Motor neuron (in vitro differentiated cells): ENCODE measurements at regions of chr7 and their contacts with region 1.

Region 1: GRCh38 chr7:122528879-122529481 is 169.9 kb downstream of the RNF133 start:
- ATAC-seq: no peak
- H3K4me3 ChIP-seq: no peak overlapping the region
- H3K27ac ChIP-seq: no peak overlapping the region
- H3K4me1 ChIP-seq: no peaks in the 10 kb centered on the region

Region 2: GRCh38 chr7:122027058-122027457 is 501.9 kb before region 1 on chr7:
- in situ Hi-C with region 1: loop called in 1 of 9 experiments (anchors 10 kb)
- ATAC-seq: no peak
- H3K4me3 ChIP-seq: no peak overlapping the region
- H3K27ac ChIP-seq: no peak overlapping the region
- H3K4me1 ChIP-seq: no peaks in the 10 kb centered on the region

Region 3: GRCh38 chr7:122092964-122093797 is 435.8 kb before region 1 on chr7:
- in situ Hi-C with region 1: loop called in 1 of 9 experiments (anchors 25 kb)
- ATAC-seq: peak in 4 of 8 experiments; percentile 22 to 71 (median 62)
- H3K4me3 ChIP-seq: no peak overlapping the region
- H3K27ac ChIP-seq: no peak overlapping the region
- H3K4me1 ChIP-seq: no peaks in the 10 kb centered on the region

Region 4: GRCh38 chr7:122219253-122219865 is 309.6 kb before region 1 on chr7:
- in situ Hi-C with region 1: loop called in 7 of 9 experiments (anchors 10 to 25 kb)
- ATAC-seq: no peak
- H3K4me3 ChIP-seq: no peak overlapping the region
- H3K27ac ChIP-seq: no peak overlapping the region
- H3K4me1 ChIP-seq: no peaks in the 10 kb centered on the region

Region 5: GRCh38 chr7:122225874-122226273 is 303.1 kb before region 1 on chr7:
- in situ Hi-C with region 1: loop called in 6 of 9 experiments (anchors 10 to 25 kb)
- ATAC-seq: no peak
- H3K4me3 ChIP-seq: no peak overlapping the region
- H3K27ac ChIP-seq: no peak overlapping the region
- H3K4me1 ChIP-seq: no peaks in the 10 kb centered on the region

Region 6: DNA sequence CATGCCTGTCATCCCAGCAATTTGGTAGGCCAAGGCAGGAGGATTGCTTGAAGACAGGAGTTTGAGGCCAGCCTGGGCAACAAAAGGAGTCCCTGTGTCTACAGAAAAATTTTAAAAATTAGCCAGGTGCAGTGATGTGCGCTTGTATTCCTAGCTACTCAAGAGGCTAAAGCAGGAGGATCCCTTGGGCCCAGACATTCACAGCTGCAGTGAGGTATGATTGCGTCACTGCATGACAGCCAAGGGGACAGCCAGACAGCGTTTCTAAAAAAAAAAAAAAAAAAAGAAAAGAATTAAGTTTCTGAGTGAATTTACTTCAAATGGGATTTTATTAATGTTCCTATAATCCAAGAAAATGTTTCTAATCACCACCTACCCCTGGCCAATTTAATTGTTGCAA is 261.2 kb after region 1 on chr7:
- in situ Hi-C with region 1: no loop called
- ATAC-seq: no peak
- H3K4me3 ChIP-seq: no peak overlapping the region
- H3K27ac ChIP-seq: no peak overlapping the region
- H3K4me1 ChIP-seq: peaks cover 2 to 10% of the 10 kb centered on the region in 2 donors

Region 7: GRCh38 chr7:122831436-122831835 is 302.5 kb after region 1 on chr7:
- in situ Hi-C with region 1: no loop called
- ATAC-seq: no peak
- H3K4me3 ChIP-seq: no peak overlapping the region
- H3K27ac ChIP-seq: no peak overlapping the region
- H3K4me1 ChIP-seq: peaks cover 2 to 5% of the 10 kb centered on the region in 2 donors